ENCODE measurements at regions of chr15 and their contacts with region 1.

Region 1: DNA sequence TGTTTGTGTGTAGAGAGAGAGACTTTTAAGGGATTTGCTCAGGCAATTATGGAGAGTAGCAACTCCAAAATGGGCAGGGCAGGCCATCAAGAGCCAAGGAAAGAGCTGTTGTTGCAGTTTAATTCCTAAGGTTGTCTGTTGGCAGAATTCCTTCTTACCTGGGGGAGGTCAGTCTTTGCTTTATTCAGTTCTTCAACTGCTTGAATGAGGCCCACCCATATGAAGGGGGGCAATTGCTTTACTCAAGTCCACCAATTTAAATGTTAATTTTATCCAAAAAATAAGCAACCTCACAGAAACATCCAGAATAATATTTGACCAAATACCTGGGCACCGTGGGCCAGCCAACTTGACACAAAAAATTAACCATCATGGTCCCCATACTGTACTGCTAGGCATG is 137.7 kb upstream of the KLHL25 start:
- DNase-seq: no peak

Region 2: GRCh38 chr15:85867250-85867649 is 65.1 kb before region 1 on chr15:
- CTCF ChIA-PET with region 1: interaction called, 11 read pairs
- POLR2A ChIA-PET with region 1: no interaction called
- DNase-seq: no peak

Region 3: DNA sequence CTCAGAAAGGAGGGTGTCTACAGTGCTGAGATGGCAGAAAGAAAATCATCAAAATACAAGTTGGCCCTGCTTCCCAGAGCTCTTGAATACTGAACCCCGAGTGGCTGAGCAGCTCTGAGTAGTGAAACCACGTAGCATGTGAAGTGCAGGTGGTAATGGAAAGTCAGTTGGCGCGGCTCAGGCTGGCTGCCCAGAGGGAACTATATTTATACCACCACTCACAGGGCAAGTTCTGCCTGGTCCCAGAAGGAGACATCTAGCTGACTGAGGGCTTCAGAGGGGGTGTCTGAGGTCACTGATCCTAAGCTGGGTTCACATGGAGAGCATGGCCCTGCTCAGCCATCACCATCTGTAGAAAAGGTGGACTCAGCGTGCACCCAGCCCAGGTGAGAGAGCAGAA is 17.7 kb after region 1 on chr15:
- CTCF ChIA-PET with region 1: no interaction called
- POLR2A ChIA-PET with region 1: no interaction called
- DNase-seq: no peak